Kidney (tissue), 22 donors: ENCODE measurements at regions of chrX and their contacts with region 1.

Region 1: DNA sequence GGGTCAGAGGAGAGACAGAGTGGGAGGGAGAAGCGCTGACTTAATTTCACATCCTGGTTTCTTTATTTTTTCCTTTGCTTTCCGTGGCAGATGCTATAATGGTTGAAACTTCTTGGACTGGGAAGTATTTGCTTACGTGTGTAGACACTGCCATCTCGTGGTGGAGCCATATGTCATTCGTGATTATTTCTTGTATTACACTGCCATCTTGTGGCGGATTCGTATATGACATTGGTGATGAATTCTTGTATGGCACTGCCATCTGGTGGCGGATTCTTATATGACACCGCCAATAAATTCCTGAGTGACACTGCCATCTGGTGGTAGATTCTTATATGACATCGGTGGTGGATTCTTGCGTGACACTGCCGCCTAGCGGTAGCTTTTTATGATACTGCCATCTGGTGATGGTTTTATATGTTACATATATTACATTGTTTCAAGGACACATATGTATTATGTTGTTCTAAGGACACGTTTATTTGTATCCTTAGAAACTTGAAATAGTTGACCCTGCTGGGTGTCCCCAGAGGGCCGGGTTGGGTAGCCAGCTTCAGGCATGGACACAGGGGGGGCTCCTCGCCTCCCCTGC is 37.3 kb upstream of the CLCN4 start:
- DNase-seq: peak in 4 of 5 donors; percentile 66 to 89 (median 76)
- H3K4me3 ChIP-seq: no peak overlapping the region
- H3K27ac ChIP-seq: no peak overlapping the region
- H3K4me1 ChIP-seq: peaks cover 0 to 2% (median 0%) of the 10 kb centered on the region in 3 donors
- H3K27me3 ChIP-seq: peaks cover 2% of the 10 kb centered on the region
- CTCF ChIP-seq: peak; percentile 100

Region 2: GRCh38 chrX:9995855-9996339 is 123.6 kb before region 1 on chrX:
- intact Hi-C with region 1: loop called (anchors 5 kb)
- DNase-seq: peak; percentile 55 to 91 (median 62)
- H3K4me3 ChIP-seq: no peak overlapping the region
- H3K27ac ChIP-seq: no peak overlapping the region
- H3K4me1 ChIP-seq: no peaks in the 10 kb centered on the region
- H3K27me3 ChIP-seq: no peaks in the 10 kb centered on the region
- CTCF ChIP-seq: peak; percentile 95